Cardiac septum (tissue), 1 donor: ENCODE measurements at regions of chr17 and their contacts with region 1.

Region 1: DNA sequence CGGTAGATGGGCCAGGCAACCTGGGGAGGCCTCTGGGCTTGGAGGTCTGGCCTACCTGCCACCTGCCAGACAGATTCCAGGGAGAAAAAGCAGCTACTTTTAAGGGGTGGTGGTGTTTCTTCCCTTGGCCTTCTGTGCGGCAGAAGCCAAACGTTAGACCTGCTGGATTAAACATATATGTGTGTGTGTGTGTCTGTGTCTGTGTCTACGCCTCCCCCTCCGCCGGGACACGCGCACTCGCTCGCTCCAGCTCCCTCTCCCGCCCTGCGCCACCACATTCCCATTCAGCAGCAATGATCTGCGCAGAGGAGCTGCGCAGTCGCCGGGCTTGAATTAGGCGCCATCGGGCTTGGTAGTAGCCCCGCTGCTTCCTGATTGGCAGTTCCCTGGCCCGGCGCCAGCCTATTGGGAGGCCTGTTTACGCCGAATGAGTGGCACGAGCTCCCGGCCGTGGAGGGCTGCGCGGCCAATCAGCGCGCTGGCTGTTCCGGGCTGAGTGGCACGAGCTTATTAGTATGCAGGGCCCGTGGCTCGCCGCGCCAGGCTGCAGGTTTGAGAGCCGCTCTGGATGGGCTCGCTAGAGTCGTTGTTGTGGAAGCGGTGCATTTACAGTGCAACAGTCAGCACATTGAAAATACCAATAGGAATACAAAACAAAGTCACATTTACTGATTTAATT is at the start of gene BAHCC1:
- DNase-seq: peak; percentile 100
- total RNA-seq, gene BAHCC1: 13.5 TPM

Region 2: DNA sequence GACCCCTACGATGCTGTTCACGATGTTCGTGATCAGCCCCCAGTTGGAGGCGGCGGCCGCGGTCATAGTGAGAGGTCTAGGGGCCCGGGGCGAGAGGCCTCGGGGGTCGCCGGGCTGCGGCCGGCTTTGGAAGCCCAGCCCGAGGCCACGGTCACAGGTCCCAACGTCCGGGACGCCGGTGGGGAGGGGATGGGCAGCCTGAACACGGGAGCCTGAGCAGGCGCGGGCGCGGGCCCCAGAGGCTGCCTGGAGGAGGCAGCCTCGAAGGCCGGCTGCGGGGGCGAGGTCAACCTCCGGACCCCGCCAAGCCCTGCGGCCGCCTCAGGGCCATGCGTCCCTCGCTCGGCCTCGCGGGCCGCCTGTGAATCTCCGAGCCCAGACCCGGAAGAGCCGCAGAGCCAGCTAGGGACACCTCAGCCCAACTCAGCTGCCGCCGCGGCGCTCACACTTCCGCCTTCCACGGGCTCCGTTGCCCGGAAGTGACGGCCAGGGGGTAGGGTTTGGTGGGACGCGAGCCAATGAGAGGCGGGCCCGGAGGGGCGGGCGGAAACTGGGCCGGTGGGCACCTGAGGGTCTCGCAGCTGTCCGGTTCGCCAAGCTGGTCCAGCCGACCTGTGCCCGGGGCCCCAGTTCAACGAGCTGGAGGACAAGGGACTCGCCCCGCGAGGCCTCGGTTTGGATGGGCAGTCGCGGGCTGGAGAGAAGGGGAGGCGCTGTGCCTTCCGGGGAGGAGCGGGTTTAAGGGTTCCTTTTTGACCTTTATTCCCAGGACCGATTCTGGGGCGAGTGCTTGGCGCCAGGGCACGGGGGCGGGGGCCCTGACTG is 100.0 kb before region 1 on chr17 and contains the start of gene SLC38A10:
- intact Hi-C with region 1: loop called (anchors 5 kb)
- DNase-seq: peak; percentile 98
- total RNA-seq, gene SLC38A10: 36.0 TPM

Region 3: DNA sequence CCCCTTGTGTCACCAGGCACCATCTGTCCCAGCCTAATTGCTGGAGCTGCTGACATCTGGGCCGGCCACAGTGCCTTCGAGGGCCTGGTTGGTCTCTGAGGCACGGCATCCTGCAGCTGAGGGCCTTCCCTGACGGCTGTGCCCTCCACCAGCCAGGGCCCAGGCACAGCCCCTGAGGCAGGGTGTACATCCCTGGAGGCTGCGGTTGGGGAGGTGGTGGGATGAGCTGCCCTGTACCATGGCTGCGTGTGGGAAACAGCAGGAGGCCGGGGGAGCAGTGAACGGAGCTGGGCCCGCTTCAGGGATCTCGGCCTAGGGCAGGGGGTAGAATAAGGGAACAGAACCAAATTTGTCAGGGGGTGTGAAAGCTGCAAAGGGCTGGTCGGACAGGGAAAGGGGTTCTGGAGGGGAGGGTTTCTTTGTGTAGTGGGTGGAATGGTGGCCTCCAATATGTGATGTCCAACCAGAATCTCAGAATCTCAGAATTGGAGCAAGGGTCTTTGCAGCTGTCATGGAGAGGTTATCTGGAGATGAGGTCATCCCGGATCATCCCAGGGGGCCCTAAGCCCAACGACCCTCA is 89.9 kb before region 1 on chr17:
- intact Hi-C with region 1: no loop called
- DNase-seq: no peak

Region 4: DNA sequence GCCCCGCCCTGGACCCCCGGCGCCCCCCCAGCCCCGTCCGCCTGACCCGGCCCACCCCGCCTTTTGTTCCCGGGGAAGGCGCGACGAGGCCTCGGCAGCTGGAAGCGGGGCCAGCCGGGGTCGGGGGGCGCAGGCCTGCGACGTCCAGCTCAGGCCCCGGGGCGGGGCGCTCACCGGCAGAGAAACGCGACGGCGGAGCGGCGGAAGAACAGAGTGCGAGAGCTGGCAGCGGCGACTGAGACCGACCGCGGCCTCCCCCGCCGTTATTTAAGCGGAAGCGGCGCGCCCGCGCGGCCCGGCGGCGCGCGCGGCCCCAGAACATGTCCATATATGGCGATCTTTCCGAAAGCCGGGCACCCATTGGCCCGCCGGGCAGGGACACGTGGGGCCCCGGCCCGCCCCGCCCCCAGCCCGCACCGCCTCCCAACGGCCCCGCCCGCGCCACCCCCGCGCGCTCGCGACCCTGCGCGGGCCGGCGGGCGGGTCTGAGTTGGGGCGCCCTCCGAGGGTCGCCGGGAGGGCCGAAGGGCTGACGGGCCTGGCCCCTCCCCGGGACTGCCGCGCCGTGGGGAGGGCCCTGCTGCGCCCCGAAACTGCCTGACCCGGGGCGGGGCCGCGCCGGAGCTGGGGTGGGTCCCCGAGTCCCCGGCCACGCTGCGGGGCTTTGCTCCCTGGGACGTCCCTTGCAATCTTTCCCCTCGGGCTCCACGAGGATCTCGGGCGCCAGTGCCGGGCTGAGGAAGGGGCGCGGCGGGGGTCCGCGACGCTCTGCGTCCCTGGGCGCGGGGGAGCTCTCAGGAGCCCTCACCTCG is 117.7 kb after region 1 on chr17 and contains the start of gene ACTG1:
- intact Hi-C with region 1: loop called (anchors 2 kb)
- DNase-seq: peak; percentile 97
- total RNA-seq, gene ACTG1: 634 TPM